Psoas muscle (tissue), 8 donors: ENCODE measurements at regions of chr3 and their contacts with region 1.

Region 1: DNA sequence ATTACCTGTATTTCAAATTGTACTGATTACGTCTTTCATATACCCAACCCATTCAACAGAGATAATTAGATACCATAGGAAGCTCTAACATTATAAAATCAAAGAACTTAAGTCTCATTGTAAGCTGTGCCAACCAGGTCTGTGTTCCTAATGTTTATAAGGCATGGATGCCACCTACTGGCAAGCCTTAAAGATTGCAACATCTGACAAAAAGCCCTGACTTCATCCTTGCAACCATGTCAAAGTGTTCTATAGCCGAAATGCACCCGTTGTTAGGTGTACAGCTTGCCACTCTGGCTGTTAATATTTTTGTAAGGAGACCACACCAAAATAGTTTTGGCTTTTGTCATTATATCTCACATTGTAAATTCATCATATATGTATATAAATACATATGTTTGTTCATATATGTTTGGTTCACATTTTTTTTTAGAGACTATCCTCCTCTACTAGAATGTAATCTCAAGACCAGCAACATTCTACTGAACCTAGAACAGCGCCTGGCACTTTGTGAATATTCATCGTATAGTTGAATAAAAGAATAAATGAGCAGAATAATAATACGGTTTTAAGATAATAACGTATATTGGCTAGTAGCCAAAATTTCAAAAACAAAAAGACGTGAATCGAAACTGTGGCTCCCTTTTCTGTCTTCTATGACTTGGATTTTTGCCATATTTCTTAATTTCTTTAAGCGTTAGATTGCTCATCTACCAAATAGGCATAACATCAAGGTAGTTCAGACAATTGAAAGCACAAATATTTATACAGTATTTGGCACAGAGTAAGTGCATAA is 258.1 kb downstream of the TBL1XR1 start:
- DNase-seq: no peak
- ATAC-seq: peak; percentile 88 to 98 (median 92)
- H3K4me3 ChIP-seq: no peak overlapping the region
- H3K27ac ChIP-seq: no peak overlapping the region
- H3K4me1 ChIP-seq: peaks cover 5% of the 10 kb centered on the region
- H3K27me3 ChIP-seq: no peaks in the 10 kb centered on the region
- CTCF ChIP-seq: peak; percentile 85

Region 2: DNA sequence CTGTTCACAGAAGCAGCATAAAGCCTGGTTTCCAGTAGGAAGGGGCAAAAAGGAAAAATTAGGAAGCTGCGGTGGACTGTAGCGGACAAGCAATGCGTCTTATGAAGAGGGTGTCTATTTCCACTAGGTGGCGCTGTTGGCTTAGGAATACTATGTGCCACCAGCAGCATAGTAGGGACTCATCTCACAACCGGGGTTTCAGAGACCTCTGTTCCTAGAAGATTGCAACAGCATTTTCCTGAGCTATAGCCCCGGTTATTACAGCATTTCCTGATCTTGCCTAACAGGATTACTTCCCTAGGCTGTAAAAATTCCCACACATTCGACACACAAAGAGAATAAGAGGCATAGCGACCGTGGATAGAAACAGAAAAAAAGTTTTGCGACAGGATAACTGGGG is 424.9 kb before region 1 on chr3:
- intact Hi-C with region 1: loop called in 1 of 2 experiments (anchors 5 kb)
- DNase-seq: no peak
- ATAC-seq: no peak
- H3K4me3 ChIP-seq: no peak overlapping the region
- H3K27ac ChIP-seq: no peak overlapping the region
- H3K4me1 ChIP-seq: no peaks in the 10 kb centered on the region
- H3K27me3 ChIP-seq: no peaks in the 10 kb centered on the region
- CTCF ChIP-seq: peak; percentile 44

Region 3: GRCh38 chr3:176623468-176624150 is 315.6 kb before region 1 on chr3:
- intact Hi-C with region 1: no loop called
- DNase-seq: no peak
- ATAC-seq: no peak
- H3K4me3 ChIP-seq: no peak overlapping the region
- H3K27ac ChIP-seq: no peak overlapping the region
- H3K4me1 ChIP-seq: no peaks in the 10 kb centered on the region
- H3K27me3 ChIP-seq: no peaks in the 10 kb centered on the region
- CTCF ChIP-seq: no peak

Region 4: DNA sequence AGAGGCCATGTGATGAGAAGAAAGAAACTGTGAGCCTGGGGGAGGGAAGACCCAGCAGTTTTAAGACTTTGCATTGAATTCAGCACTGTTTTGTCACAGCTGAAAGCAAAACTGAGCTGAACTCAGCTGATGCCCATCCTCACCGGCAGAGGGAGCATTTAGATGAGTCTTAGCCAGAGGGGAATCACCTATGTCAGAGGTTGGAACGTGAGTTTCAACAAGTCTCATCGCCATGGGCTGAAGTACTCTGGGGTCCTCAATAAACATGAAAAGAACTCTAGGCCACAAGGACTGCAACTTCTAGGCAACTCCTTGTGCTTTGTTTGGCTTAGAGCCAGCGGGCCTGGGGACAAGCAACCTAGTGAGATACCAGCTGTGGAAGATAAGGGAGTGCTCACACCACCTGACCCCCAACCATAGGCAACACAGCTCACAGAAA is 66.4 kb before region 1 on chr3:
- intact Hi-C with region 1: loop called (anchors 2 kb)
- DNase-seq: no peak
- ATAC-seq: peak; percentile 66 to 89 (median 76)
- H3K4me3 ChIP-seq: no peak overlapping the region
- H3K27ac ChIP-seq: no peak overlapping the region
- H3K4me1 ChIP-seq: no peaks in the 10 kb centered on the region
- H3K27me3 ChIP-seq: no peaks in the 10 kb centered on the region
- CTCF ChIP-seq: peak; percentile 69